CD4-positive, alpha-beta memory T cell (primary cell): ENCODE measurements at regions of chr7 and their contacts with region 1.

Region 1: GRCh38 chr7:151876899-151877777 is at the start of gene PRKAG2:
- DNase-seq: peak; percentile 70 to 84 (median 77)
- H3K4me3 ChIP-seq: peak within 1 kb of the TSS; percentile 89 to 90
- H3K4me3 Mint-ChIP-seq: peak within 1 kb of the TSS; percentile 95 to 100 (median 96)
- H3K27ac ChIP-seq: peak within 1 kb of the TSS; percentile 72
- H3K27ac Mint-ChIP-seq: peak within 1 kb of the TSS; percentile 86 to 97 (median 95)
- H3K4me1 ChIP-seq: peaks cover 20% of the 10 kb centered on the region
- H3K4me1 Mint-ChIP-seq: peaks cover 6 to 33% (median 19%) of the 10 kb centered on the region in 4 donors
- H3K27me3 ChIP-seq: no peaks in the 10 kb centered on the region
- H3K27me3 Mint-ChIP-seq: no peaks in the 10 kb centered on the region
- total RNA-seq, gene PRKAG2: 60.4 to 61.0 TPM

Region 2: GRCh38 chr7:151341357-151342101 is 535.6 kb before region 1 on chr7 and contains the start of gene NUB1:
- CTCF ChIA-PET with region 1: no interaction called
- POLR2A ChIA-PET with region 1: no interaction called
- intact Hi-C with region 1: loop called (anchors 2 kb)
- DNase-seq: peak; percentile 84 to 94 (median 88)
- H3K4me3 ChIP-seq: peak within 1 kb of the TSS; percentile 80 to 86
- H3K4me3 Mint-ChIP-seq: peak within 1 kb of the TSS; percentile 79 to 91 (median 89)
- H3K27ac ChIP-seq: peak within 1 kb of the TSS; percentile 81
- H3K27ac Mint-ChIP-seq: peak within 1 kb of the TSS; percentile 87 to 97 (median 93)
- H3K4me1 ChIP-seq: peaks cover 28% of the 10 kb centered on the region
- H3K4me1 Mint-ChIP-seq: peaks cover 19 to 42% (median 29%) of the 10 kb centered on the region in 4 donors
- H3K27me3 ChIP-seq: no peaks in the 10 kb centered on the region
- H3K27me3 Mint-ChIP-seq: no peaks in the 10 kb centered on the region
- total RNA-seq, gene NUB1: 116 to 119 TPM

Region 3: DNA sequence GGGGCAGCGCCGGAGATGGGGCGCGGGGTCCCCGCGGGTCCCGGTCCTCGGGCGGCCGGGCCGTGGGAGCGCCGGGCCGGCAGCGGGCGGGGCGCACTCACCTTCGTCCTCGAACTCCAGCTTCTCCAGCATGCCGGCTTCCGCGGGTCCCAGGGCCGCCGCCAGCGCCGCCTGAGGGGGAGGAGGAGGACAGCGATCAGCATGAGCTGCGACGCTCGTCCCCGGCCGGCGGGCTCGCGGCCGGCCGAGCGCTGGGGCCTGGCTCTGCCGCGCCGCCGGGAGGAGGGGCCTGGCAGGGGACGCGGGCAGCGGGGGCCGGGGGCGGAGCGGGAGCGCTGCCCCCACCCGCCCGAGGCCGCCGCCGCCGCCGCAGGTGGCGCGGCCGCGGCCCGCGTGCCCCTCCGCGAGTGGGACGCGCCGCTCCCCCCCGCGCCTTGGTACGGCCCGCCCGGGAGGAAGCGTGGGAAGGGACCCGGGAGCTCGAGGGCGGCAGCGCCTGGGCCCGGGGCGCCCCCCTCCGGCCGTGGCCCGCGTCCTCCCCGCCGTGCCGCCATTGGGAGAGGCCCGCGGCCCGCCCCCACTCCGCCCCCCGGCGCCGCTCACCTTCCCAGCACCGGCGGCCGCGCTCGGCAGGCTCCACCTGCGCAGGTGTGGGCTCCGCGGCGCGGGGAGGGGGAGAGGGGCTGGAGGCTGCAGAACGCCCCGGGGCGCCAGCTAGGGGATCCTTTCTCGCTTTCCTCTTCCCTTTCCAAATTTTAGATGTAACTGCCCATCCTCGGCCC is 245.0 kb before region 1 on chr7:
- CTCF ChIA-PET with region 1: no interaction called
- POLR2A ChIA-PET with region 1: interaction called, 20 read pairs
- intact Hi-C with region 1: loop called (anchors 1 kb)
- DNase-seq: peak; percentile 84 to 91 (median 88)
- H3K4me3 ChIP-seq: peak overlapping the region; percentile 73 to 83
- H3K4me3 Mint-ChIP-seq: peak overlapping the region; percentile 89 to 99 (median 96)
- H3K27ac ChIP-seq: peak overlapping the region; percentile 78
- H3K27ac Mint-ChIP-seq: peak overlapping the region; percentile 94 to 99 (median 97)
- H3K4me1 ChIP-seq: peaks cover 18% of the 10 kb centered on the region
- H3K4me1 Mint-ChIP-seq: peaks cover 18 to 38% (median 21%) of the 10 kb centered on the region in 4 donors
- H3K27me3 ChIP-seq: no peaks in the 10 kb centered on the region
- H3K27me3 Mint-ChIP-seq: no peaks in the 10 kb centered on the region

Region 4: DNA sequence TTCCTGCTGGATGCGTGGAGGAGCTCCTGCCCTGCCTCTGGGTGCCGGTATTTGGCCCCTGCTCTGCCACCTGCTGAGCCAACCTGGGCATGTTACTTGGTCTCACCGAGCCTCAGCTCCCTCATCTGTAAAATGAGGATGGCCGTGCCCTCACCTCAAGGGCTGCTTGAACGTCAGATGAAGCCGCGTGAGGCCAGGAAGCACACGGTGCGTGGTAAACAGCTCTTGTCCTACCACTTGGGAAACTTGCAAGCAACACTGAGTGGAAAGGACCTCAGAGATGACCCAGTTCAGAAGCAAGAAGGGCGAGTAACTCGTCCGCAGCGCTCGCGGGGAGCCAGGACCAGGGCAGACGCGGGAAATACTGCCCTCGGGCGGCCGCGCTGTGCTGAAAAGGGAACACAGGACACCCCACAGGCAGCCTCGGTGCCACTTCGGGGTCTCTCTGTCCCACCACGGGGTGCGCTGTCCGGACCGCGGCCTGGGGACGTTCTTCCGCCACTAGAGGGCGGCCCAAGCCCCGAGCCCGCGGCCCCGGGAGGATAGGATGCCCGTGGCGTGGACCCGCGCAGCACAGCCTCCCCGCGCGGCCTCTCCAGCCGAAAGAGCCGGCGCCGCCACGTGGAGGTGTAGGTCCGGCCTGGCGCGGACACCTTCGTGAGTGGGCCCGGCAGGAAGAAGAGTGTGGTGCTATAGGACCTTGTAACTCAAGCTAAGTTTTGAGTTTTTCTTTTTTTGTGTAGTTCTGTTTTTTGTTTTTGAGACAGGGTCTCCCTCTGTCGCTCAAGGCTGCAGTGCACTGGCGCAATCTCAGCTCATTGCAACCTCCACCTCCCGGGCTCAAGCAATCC is 94.3 kb before region 1 on chr7:
- CTCF ChIA-PET with region 1: interaction called, 7 read pairs
- POLR2A ChIA-PET with region 1: no interaction called
- intact Hi-C with region 1: loop called (anchors 2 kb)
- DNase-seq: peak; percentile 44 to 62 (median 53)
- H3K4me3 ChIP-seq: peak overlapping the region in 1 of 2 donors; percentile 5
- H3K4me3 Mint-ChIP-seq: peak overlapping the region; percentile 82 to 96 (median 86)
- H3K27ac ChIP-seq: no peak overlapping the region
- H3K27ac Mint-ChIP-seq: peak overlapping the region; percentile 57 to 95 (median 88)
- H3K4me1 ChIP-seq: peaks cover 12% of the 10 kb centered on the region
- H3K4me1 Mint-ChIP-seq: peaks cover 7 to 21% (median 14%) of the 10 kb centered on the region in 4 donors
- H3K27me3 ChIP-seq: no peaks in the 10 kb centered on the region
- H3K27me3 Mint-ChIP-seq: no peaks in the 10 kb centered on the region

Region 5: GRCh38 chr7:151936207-151936606 is 59.1 kb after region 1 on chr7:
- CTCF ChIA-PET with region 1: interaction called, 4 read pairs
- POLR2A ChIA-PET with region 1: interaction called, 29 read pairs
- intact Hi-C with region 1: loop called (anchors 1 kb)
- DNase-seq: peak in 4 of 5 donors; percentile 60 to 76 (median 68)
- H3K4me3 ChIP-seq: peak overlapping the region in 1 of 2 donors; percentile 8
- H3K4me3 Mint-ChIP-seq: peak overlapping the region; percentile 78 to 94 (median 87)
- H3K27ac ChIP-seq: peak overlapping the region; percentile 54
- H3K27ac Mint-ChIP-seq: peak overlapping the region; percentile 85 to 99 (median 98)
- H3K4me1 ChIP-seq: peaks cover 15% of the 10 kb centered on the region
- H3K4me1 Mint-ChIP-seq: peaks cover 16 to 23% (median 21%) of the 10 kb centered on the region in 4 donors
- H3K27me3 ChIP-seq: no peaks in the 10 kb centered on the region
- H3K27me3 Mint-ChIP-seq: no peaks in the 10 kb centered on the region

Region 6: DNA sequence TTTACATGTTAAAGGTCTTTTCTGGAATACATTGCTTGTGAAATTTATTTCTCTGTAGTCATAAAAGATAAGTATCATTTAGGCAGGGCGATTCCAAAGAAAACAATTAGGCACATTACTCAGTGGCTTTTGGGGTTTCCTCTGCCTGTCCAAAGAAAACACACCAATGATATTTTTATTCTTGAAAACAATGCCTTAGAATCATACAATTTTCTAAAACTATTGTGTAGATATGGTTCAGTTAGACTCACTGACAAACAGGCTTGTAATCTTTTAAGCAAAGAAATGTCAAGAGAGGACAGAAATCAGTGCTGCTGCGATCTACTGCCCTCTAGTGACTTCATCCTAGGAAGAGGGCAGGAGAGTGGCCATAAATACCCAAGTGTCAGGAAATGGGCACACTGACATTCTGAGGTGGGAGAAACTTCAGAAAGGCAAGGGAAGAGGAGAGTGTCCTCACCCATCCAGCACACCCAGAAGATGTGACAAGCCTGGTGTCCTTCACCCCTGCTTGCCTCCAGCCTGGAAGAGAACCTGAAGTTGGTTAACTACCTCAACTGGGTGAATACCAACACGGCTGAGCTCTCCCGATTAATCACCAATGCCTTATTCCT is 268.8 kb after region 1 on chr7:
- CTCF ChIA-PET with region 1: no interaction called
- POLR2A ChIA-PET with region 1: interaction called, 11 read pairs
- intact Hi-C with region 1: loop called (anchors 5 kb)
- DNase-seq: peak in 4 of 5 donors; percentile 41 to 45 (median 44)
- H3K4me3 ChIP-seq: peak overlapping the region in 1 of 2 donors; percentile 2
- H3K4me3 Mint-ChIP-seq: peak overlapping the region in 6 of 8 donors; percentile 46 to 83 (median 72)
- H3K27ac ChIP-seq: no peak overlapping the region
- H3K27ac Mint-ChIP-seq: peak overlapping the region; percentile 48 to 95 (median 89)
- H3K4me1 ChIP-seq: peaks cover 47% of the 10 kb centered on the region
- H3K4me1 Mint-ChIP-seq: peaks cover 38 to 48% (median 42%) of the 10 kb centered on the region in 4 donors
- H3K27me3 ChIP-seq: no peaks in the 10 kb centered on the region
- H3K27me3 Mint-ChIP-seq: no peaks in the 10 kb centered on the region